HEK293 (cell line): ENCODE measurements at regions of chr9 and their contacts with region 1.

Region 1: GRCh38 chr9:96859461-96860198 is 5.3 kb upstream of the ZNF782 start:
- H3K4me3 ChIP-seq: no peak overlapping the region
- H3K27ac ChIP-seq: no peak overlapping the region
- H3K4me1 ChIP-seq: no peaks in the 10 kb centered on the region
- CTCF ChIP-seq: no peak

Region 2: DNA sequence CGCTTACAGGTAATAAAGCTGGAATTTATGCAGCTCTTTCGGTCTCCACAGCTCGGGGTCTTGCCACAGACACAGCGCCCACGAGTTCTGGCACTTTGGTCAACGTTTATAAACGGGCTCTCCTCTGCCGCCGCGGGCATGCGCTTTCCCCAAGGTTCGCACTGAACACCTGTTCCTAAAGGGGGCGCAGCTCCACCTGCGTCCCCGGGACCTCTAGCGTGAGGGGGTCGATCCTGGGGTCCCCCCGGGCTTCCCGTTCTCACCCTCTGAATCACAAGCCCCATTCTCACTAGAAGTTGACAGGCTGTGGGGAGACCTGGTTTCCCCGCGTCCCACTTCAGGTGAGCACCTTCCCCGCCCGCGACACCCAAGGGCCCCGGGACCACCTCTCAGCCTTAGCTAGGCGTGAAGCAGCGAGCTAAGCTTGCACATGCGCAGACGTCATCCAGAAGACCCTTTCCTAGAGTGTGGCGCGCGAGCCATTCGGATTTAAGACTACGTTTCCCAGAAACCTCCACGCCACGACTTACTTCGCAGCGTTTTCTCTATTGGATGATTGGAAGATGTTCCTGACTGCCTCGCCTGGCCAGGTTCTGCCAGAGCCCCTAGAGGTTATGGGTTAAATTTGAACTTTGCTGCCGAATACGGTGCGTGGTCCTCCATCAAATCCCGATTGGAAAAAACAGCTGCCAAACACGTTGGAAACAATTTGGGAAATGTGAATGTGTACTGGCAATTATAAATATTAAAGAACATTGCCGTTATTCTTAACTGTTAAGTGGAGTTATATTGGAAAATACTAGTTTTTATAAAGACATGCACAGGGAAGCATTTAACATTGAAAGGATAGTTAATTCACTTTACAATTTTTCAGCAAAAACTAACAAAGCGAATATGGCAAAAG is 16.1 kb after region 1 on chr9:
- CTCF ChIA-PET with region 1: interaction called, 67 read pairs
- POLR2A ChIA-PET with region 1: interaction called, 15 read pairs
- H3K4me3 ChIP-seq: peak overlapping the region; percentile 62
- H3K27ac ChIP-seq: no peak overlapping the region; the same call in 1 of the 2 replicates
- H3K4me1 ChIP-seq: no peaks in the 10 kb centered on the region
- CTCF ChIP-seq: peak; percentile 69

Region 3: DNA sequence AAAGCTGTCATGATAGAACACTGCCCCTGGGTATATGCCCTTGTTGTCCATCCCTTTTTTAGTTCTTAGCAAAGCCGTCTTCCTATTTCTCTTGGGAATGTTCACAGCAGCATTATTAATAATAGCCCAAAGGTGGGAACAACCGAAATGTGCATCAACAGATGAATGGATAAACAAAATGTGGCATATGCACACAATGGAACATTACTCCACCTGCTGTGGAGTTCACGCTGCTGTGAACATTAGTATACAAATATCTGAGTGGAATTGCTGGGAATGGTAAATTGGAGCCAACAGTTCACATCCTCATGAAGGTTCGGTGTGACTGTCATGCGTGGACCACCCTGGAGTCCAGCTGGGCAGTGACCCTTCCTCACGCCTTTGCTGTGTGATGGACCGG is 32.5 kb after region 1 on chr9:
- CTCF ChIA-PET with region 1: no interaction called
- POLR2A ChIA-PET with region 1: no interaction called
- H3K4me3 ChIP-seq: no peak overlapping the region
- H3K27ac ChIP-seq: no peak overlapping the region
- H3K4me1 ChIP-seq: no peaks in the 10 kb centered on the region
- CTCF ChIP-seq: no peak